ENCODE measurements at regions of chr2 and their contacts with region 1.

Region 1: DNA sequence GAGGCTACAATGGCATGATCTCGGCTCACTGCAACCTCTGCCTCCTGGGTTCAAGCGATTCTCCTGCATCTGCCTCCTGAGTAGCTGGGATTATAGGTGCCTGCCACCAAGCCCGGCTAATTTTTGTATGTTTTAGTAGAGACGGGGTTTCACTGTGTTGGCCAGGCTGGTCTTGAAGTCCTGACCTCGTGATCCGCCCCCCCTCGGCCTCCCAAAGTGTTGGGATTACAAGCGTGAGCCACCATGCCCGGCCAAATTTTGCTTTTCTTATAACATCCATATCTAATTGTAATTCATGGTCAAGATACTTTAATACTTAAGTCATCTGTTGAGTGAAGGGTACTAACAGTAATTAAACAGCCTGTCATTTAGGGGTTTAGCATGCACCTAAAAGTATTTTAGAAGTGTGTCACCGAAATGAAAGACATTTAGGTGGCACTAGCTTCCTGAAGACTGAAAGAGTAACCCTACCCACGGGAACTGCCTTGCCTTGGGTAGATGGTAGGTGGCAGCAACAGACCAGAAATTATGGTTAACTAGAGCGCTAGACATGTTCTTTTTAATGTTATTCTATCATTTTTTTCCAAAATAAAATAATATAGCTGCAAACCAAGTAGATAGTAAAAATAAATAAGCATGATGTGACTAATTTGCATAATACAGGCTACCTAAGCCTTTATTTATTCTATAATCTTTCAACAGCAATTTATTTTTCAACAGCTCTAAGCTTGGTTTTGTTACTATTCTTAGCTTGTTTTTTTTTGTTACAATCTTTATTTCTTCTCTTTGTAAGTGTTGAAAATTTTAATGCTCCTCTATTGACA is 8.6 kb upstream of the ACYP2 start:
- DNase-seq: no peak
- H3K4me3 ChIP-seq: no peak overlapping the region
- H3K27ac ChIP-seq: no peak overlapping the region
- H3K4me1 ChIP-seq: peaks cover 3 to 5% of the 10 kb centered on the region in 2 donors
- H3K27me3 ChIP-seq: no peaks in the 10 kb centered on the region
- CTCF ChIP-seq: peak; percentile 60 to 80 (median 62)

Region 2: GRCh38 chr2:53896864-53897263 is 210.0 kb before region 1 on chr2:
- intact Hi-C with region 1: no loop called
- DNase-seq: no peak
- H3K4me3 ChIP-seq: no peak overlapping the region
- H3K27ac ChIP-seq: no peak overlapping the region
- H3K4me1 ChIP-seq: no peaks in the 10 kb centered on the region
- H3K27me3 ChIP-seq: no peaks in the 10 kb centered on the region
- CTCF ChIP-seq: no peak

Region 3: GRCh38 chr2:54052825-54053718 is 53.8 kb before region 1 on chr2:
- intact Hi-C with region 1: no loop called
- DNase-seq: no peak
- H3K4me3 ChIP-seq: no peak overlapping the region
- H3K27ac ChIP-seq: peak overlapping the region; percentile 23 to 48
- H3K4me1 ChIP-seq: peaks cover 0 to 21% of the 10 kb centered on the region in 2 donors
- H3K27me3 ChIP-seq: no peaks in the 10 kb centered on the region
- CTCF ChIP-seq: no peak

Region 4: GRCh38 chr2:54204476-54204875 is 97.6 kb after region 1 on chr2:
- intact Hi-C with region 1: no loop called
- DNase-seq: no peak
- H3K4me3 ChIP-seq: no peak overlapping the region
- H3K27ac ChIP-seq: peak overlapping the region in 1 of 2 donors; percentile 20
- H3K4me1 ChIP-seq: peaks cover 0 to 21% of the 10 kb centered on the region in 2 donors
- H3K27me3 ChIP-seq: no peaks in the 10 kb centered on the region
- CTCF ChIP-seq: no peak

Region 5: DNA sequence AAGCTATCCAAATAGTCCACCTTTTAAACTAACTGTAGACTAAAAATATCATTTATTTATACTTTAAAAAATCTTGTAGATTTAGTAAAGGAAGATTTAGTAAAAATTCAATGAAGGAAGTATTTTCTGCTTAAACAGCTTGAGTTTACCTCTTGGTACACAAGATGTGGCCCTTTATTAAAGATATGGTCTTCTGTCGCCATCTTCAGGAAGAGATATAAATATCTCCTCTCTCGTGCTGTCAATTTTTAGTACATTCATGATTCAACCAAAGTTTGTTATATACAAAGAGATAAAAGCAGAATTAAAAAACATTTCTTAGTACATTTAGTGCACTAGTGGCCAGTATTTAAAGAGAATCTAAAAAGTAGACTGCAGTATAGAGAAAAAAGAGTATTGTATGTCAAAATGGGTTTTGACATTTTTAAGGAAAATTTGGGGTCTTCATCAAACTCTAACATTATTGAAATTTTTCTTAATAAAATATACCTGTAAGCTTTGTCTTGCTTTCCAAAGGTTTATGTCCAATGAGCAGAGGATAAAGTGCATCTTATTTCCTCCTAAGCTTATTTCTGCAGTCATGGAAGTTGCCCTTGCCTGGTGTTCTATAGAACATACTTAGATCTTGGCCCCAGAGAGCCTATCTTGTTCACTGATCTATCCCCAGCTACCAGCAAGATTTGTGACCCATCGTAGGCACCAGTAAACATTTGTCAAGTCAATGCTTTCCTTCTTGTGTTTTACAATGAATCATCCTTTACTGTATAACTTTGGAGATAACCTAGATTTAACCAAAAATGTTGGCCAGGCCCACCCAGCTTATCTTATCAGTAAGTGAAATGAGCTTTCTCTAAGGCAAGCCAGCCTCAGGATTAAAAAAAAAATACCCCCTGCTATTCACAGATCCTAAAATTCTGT is 598.1 kb after region 1 on chr2:
- intact Hi-C with region 1: loop called (anchors 2 kb)
- DNase-seq: no peak
- H3K4me3 ChIP-seq: no peak overlapping the region
- H3K27ac ChIP-seq: no peak overlapping the region
- H3K4me1 ChIP-seq: peaks cover 0 to 7% of the 10 kb centered on the region in 2 donors
- H3K27me3 ChIP-seq: no peaks in the 10 kb centered on the region
- CTCF ChIP-seq: peak; percentile 52 to 66 (median 58)

Region 6: DNA sequence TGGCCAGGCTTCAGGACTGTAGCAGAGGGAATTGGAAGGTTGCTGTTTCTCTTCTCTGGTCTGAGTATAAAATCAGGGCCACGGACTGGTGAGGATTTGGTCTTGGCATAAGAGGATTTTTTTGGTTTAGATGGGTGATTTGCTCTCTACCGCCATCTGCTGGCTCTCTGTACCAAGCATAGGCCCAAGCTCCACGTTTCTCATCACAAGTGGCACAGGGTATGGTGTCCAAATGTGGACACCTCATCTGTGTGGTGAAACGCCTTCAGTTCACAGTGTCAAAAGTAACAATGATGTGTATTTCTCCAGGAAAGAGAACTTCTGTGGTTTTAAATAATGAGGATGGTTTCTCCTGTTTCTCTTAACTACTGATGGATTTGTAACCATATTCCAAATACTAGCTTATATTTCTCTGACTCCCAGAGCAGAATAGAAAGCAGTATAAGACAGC is 731.8 kb after region 1 on chr2:
- intact Hi-C with region 1: loop called (anchors 2 kb)
- DNase-seq: peak in 1 of 2 donors; percentile 79
- H3K4me3 ChIP-seq: no peak overlapping the region
- H3K27ac ChIP-seq: no peak overlapping the region
- H3K4me1 ChIP-seq: no peaks in the 10 kb centered on the region
- H3K27me3 ChIP-seq: no peaks in the 10 kb centered on the region
- CTCF ChIP-seq: peak; percentile 49 to 82 (median 75)

Measured in ascending aorta (tissue), 2 donors.